CD4-positive, alpha-beta memory T cell (primary cell): ENCODE measurements at regions of chr19 and their contacts with region 1.

Region 1: GRCh38 chr19:17266975-17267788 is at the start of gene BABAM1:
- DNase-seq: peak; percentile 97 to 99 (median 99)
- H3K4me3 ChIP-seq: peak within 1 kb of the TSS; percentile 90 to 98
- H3K4me3 Mint-ChIP-seq: peak within 1 kb of the TSS; percentile 83 to 92 (median 88)
- H3K27ac ChIP-seq: peak within 1 kb of the TSS; percentile 73
- H3K27ac Mint-ChIP-seq: peak within 1 kb of the TSS; percentile 81 to 95 (median 89)
- H3K4me1 ChIP-seq: peaks cover 26% of the 10 kb centered on the region
- H3K4me1 Mint-ChIP-seq: peaks cover 12 to 34% (median 26%) of the 10 kb centered on the region in 4 donors
- H3K27me3 ChIP-seq: no peaks in the 10 kb centered on the region
- H3K27me3 Mint-ChIP-seq: peaks cover 1 to 2% of the 10 kb centered on the region in 2 donors
- total RNA-seq, gene BABAM1: 101 to 112 TPM

Region 2: GRCh38 chr19:17125715-17126677 is 141.2 kb before region 1 on chr19:
- CTCF ChIA-PET with region 1: no interaction called
- POLR2A ChIA-PET with region 1: interaction called, 11 read pairs
- intact Hi-C with region 1: no loop called
- DNase-seq: peak; percentile 82 to 91 (median 87)
- H3K4me3 ChIP-seq: peak overlapping the region; percentile 51 to 73
- H3K4me3 Mint-ChIP-seq: peak overlapping the region; percentile 79 to 93 (median 91)
- H3K27ac ChIP-seq: peak overlapping the region; percentile 76
- H3K27ac Mint-ChIP-seq: peak overlapping the region; percentile 97 to 99 (median 99)
- H3K4me1 ChIP-seq: peaks cover 52% of the 10 kb centered on the region
- H3K4me1 Mint-ChIP-seq: peaks cover 23 to 61% (median 40%) of the 10 kb centered on the region in 4 donors
- H3K27me3 ChIP-seq: no peaks in the 10 kb centered on the region
- H3K27me3 Mint-ChIP-seq: no peaks in the 10 kb centered on the region

Region 3: GRCh38 chr19:17226002-17226933 is 40.9 kb before region 1 on chr19 and contains the start of gene OCEL1:
- CTCF ChIA-PET with region 1: interaction called, 3 read pairs
- POLR2A ChIA-PET with region 1: interaction called, 13 read pairs
- intact Hi-C with region 1: loop called (anchors 5 kb)
- DNase-seq: peak; percentile 96 to 98 (median 97)
- H3K4me3 ChIP-seq: peak within 1 kb of the TSS; percentile 73 to 90
- H3K4me3 Mint-ChIP-seq: peak within 1 kb of the TSS; percentile 95 to 99 (median 95)
- H3K27ac ChIP-seq: peak within 1 kb of the TSS; percentile 73
- H3K27ac Mint-ChIP-seq: peak within 1 kb of the TSS; percentile 98 to 99 (median 98)
- H3K4me1 ChIP-seq: peaks cover 14% of the 10 kb centered on the region
- H3K4me1 Mint-ChIP-seq: peaks cover 4 to 19% (median 7%) of the 10 kb centered on the region in 4 donors
- H3K27me3 ChIP-seq: no peaks in the 10 kb centered on the region
- H3K27me3 Mint-ChIP-seq: no peaks in the 10 kb centered on the region
- total RNA-seq, gene OCEL1: 23.9 to 29.3 TPM

Region 4: DNA sequence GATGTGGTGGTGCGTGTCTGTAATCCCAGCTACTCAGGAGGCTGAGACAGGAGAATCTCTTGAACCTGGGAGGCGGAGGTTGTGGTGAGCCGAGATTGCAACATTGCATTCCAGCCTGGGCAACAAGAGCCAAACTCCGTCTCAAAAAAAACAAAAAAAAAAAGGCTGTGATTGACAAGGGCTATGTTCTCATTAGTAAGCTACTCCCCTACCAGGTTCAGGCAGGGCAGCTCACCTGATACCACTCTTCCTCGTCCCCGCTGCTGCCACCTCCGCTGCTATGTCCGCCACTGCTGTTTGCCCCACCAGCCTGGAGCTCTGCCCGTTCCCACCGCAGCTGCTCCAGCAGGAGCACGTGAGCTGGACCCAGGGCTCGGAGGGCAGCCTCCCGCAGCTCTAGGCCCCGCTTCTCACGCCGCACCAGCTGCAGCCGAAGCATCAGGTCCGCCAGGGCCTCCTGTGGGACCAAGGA is 12.0 kb before region 1 on chr19:
- CTCF ChIA-PET with region 1: interaction called, 11 read pairs
- POLR2A ChIA-PET with region 1: interaction called, 3 read pairs
- intact Hi-C with region 1: no loop called
- DNase-seq: no peak
- H3K4me3 ChIP-seq: no peak overlapping the region
- H3K4me3 Mint-ChIP-seq: no peak overlapping the region
- H3K27ac ChIP-seq: no peak overlapping the region
- H3K27ac Mint-ChIP-seq: peak overlapping the region in 1 of 7 donors; percentile 41
- H3K4me1 ChIP-seq: no peaks in the 10 kb centered on the region
- H3K4me1 Mint-ChIP-seq: no peaks in the 10 kb centered on the region
- H3K27me3 ChIP-seq: no peaks in the 10 kb centered on the region
- H3K27me3 Mint-ChIP-seq: no peaks in the 10 kb centered on the region

Region 5: DNA sequence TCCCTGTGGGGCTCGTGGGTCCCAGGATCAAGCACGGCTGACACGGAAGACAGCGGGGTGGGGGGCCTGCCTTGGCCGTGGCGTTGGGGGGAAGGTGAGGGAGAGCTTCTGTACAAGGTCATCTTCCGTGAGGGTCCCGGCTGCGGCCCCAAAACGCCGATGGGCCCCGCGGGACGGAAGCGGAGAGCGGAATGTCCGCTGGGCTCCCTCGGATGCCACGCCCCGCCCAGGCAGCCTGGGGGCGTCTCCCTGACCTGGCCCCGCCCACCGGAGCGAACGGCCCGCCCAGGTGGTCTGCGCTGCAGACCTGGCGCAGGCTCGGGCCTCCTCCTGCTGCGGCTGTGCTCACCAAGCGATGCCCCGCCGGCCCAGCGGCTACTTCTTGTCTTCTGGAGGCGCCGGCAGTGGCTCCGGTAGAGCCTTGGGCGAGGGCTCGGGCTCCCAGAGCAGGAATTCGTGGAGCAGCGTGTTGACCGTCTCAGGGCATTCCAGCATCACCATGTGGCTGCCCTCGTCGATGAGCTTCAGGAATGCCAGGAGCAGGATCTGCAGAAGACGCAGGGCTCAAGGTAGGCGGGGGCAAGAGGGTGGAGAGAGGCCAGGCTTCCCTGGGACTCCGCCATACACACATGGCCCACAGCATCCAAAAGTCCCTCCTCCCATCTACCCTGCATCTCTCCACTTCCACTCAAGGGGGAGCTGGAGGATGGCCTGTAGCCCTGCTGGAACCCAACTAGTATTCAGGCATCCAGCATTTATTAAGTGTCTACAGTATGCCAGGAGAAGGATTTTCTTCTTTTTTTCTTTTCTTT is 25.3 kb after region 1 on chr19:
- CTCF ChIA-PET with region 1: interaction called, 4 read pairs
- POLR2A ChIA-PET with region 1: interaction called, 9 read pairs
- intact Hi-C with region 1: loop called (anchors 1 kb)
- DNase-seq: peak; percentile 77 to 85 (median 80)
- H3K4me3 ChIP-seq: peak overlapping the region; percentile 61 to 75
- H3K4me3 Mint-ChIP-seq: peak overlapping the region; percentile 88 to 92 (median 90)
- H3K27ac ChIP-seq: peak overlapping the region; percentile 20
- H3K27ac Mint-ChIP-seq: peak overlapping the region; percentile 47 to 89 (median 81)
- H3K4me1 ChIP-seq: peaks cover 6% of the 10 kb centered on the region
- H3K4me1 Mint-ChIP-seq: peaks cover 3 to 5% (median 4%) of the 10 kb centered on the region in 4 donors
- H3K27me3 ChIP-seq: no peaks in the 10 kb centered on the region
- H3K27me3 Mint-ChIP-seq: peaks cover 0 to 4% of the 10 kb centered on the region in 2 donors

Region 6: GRCh38 chr19:17336872-17337722 is 69.9 kb after region 1 on chr19 and contains the start of gene GTPBP3:
- CTCF ChIA-PET with region 1: no interaction called
- POLR2A ChIA-PET with region 1: interaction called, 7 read pairs
- intact Hi-C with region 1: loop called (anchors 2 kb)
- DNase-seq: peak; percentile 93 to 99 (median 97)
- H3K4me3 ChIP-seq: peak within 1 kb of the TSS; percentile 52 to 99
- H3K4me3 Mint-ChIP-seq: peak within 1 kb of the TSS; percentile 90 to 98 (median 94)
- H3K27ac ChIP-seq: peak within 1 kb of the TSS; percentile 84
- H3K27ac Mint-ChIP-seq: peak within 1 kb of the TSS; percentile 90 to 99 (median 97)
- H3K4me1 ChIP-seq: peaks cover 47% of the 10 kb centered on the region
- H3K4me1 Mint-ChIP-seq: peaks cover 18 to 53% (median 32%) of the 10 kb centered on the region in 4 donors
- H3K27me3 ChIP-seq: no peaks in the 10 kb centered on the region
- H3K27me3 Mint-ChIP-seq: no peaks in the 10 kb centered on the region
- total RNA-seq, gene GTPBP3: 53.7 to 58.4 TPM